Mammary epithelial cell (primary cell): ENCODE measurements at regions of chr7 and their contacts with region 1.

Region 1: DNA sequence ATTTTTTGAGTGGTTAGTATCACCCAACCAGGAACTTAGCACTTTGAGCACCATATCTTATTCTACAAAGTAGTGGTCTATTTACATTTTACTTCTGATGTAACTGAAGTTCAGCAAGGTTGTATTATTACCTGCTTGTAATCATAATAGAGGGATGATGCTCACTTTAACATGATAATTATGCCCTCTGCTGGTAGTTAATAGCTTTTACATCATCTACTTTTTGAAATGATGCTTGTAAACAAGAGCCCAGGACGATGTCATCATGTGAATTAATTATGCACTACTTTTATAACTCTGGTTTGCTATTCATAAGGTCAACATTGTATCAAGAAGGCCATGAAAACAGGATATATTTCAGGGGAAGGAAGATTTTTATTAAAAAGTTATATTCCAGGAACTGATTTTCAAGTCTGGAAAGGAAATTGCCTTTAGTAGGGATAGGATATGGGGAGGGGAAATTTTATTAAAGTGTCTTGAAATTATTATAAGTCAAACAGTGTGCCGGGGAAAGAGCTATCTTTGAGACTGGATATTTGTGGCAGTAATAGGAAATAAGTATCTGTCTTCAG is 80.3 kb upstream of the SCIN start:
- DNase-seq: peak; percentile 14
- H3K4me3 ChIP-seq: no peak overlapping the region
- H3K27ac ChIP-seq: no peak overlapping the region
- H3K4me1 ChIP-seq: no peaks in the 10 kb centered on the region
- H3K27me3 ChIP-seq: no peaks in the 10 kb centered on the region
- CTCF ChIP-seq: peak; percentile 32 to 60

Region 2: GRCh38 chr7:11427686-11428273 is 1062.4 kb before region 1 on chr7:
- CTCF ChIA-PET with region 1: no interaction called
- dilution Hi-C with region 1: no loop called
- in situ Hi-C with region 1: no loop called
- intact Hi-C with region 1: loop called (anchors 2 kb)
- DNase-seq: peak; percentile 38
- H3K4me3 ChIP-seq: no peak overlapping the region
- H3K27ac ChIP-seq: no peak overlapping the region
- H3K4me1 ChIP-seq: no peaks in the 10 kb centered on the region
- H3K27me3 ChIP-seq: peaks cover 4% of the 10 kb centered on the region
- CTCF ChIP-seq: peak; percentile 64 to 73

Region 3: GRCh38 chr7:11831736-11832495 is 658.3 kb before region 1 on chr7 and contains the start of gene THSD7A:
- CTCF ChIA-PET with region 1: no interaction called
- dilution Hi-C with region 1: no loop called
- in situ Hi-C with region 1: loop called (anchors 10 to 25 kb)
- intact Hi-C with region 1: loop called (anchors 2 kb)
- DNase-seq: peak; percentile 17
- H3K4me3 ChIP-seq: peak within 1 kb of the TSS; percentile 30 to 46 (median 41)
- H3K27ac ChIP-seq: no peak within 1 kb of the TSS
- H3K4me1 ChIP-seq: peaks cover 14% of the 10 kb centered on the region
- H3K27me3 ChIP-seq: peaks cover 23% of the 10 kb centered on the region
- CTCF ChIP-seq: no peak
- total RNA-seq, gene THSD7A: not detected

Region 4: DNA sequence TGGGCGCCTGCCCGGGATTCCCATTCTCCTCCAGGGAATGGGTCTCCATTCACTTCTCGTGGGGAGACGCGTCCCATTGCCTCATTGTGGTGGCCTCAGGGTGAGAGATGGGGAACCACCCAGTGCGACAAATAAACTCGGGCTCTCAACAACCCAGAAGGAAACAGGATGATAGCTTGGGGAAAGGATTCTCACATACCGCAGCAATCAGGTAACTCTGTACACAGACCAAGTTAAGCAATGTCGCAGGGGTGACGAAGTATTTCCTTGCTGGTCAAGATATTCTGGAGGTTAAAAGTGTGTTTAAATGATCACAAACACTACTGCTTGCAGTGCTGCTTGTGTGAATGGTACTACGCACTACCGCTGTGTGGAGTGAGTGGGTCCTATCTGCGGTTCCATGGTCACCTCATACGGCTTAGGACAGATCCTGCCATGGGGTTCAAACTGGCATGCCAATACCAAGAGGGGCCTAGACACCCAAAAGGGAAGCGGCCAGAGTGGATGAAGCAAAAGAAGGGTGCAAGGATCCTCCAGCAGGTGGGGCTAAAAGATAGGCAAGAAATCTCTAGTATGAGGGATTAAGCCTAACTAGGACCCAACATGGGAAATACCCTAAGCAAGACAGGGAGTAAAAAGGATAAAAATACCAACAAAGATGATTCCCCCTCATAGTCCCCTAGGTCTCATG is 422.9 kb before region 1 on chr7:
- CTCF ChIA-PET with region 1: no interaction called
- dilution Hi-C with region 1: no loop called
- in situ Hi-C with region 1: loop called in 1 of 2 experiments (anchors 25 kb)
- intact Hi-C with region 1: loop called (anchors 1 kb)
- DNase-seq: peak; percentile 28
- H3K4me3 ChIP-seq: no peak overlapping the region
- H3K27ac ChIP-seq: no peak overlapping the region
- H3K4me1 ChIP-seq: no peaks in the 10 kb centered on the region
- H3K27me3 ChIP-seq: no peaks in the 10 kb centered on the region
- CTCF ChIP-seq: peak; percentile 46 to 70

Region 5: GRCh38 chr7:12378389-12378788 is 111.8 kb before region 1 on chr7:
- CTCF ChIA-PET with region 1: no interaction called
- dilution Hi-C with region 1: no loop called
- in situ Hi-C with region 1: no loop called
- intact Hi-C with region 1: no loop called
- DNase-seq: no peak
- H3K4me3 ChIP-seq: no peak overlapping the region
- H3K27ac ChIP-seq: no peak overlapping the region
- H3K4me1 ChIP-seq: no peaks in the 10 kb centered on the region
- H3K27me3 ChIP-seq: no peaks in the 10 kb centered on the region
- CTCF ChIP-seq: no peak

Region 6: GRCh38 chr7:12389089-12389700 is 101.0 kb before region 1 on chr7:
- CTCF ChIA-PET with region 1: no interaction called
- dilution Hi-C with region 1: no loop called
- in situ Hi-C with region 1: loop called in 1 of 2 experiments (anchors 5 kb)
- intact Hi-C with region 1: loop called (anchors 1 kb)
- DNase-seq: peak; percentile 41
- H3K4me3 ChIP-seq: no peak overlapping the region
- H3K27ac ChIP-seq: no peak overlapping the region
- H3K4me1 ChIP-seq: no peaks in the 10 kb centered on the region
- H3K27me3 ChIP-seq: no peaks in the 10 kb centered on the region
- CTCF ChIP-seq: peak; percentile 81 to 90

Region 7: GRCh38 chr7:12434009-12434642 is 56.1 kb before region 1 on chr7:
- CTCF ChIA-PET with region 1: no interaction called
- dilution Hi-C with region 1: loop called (anchors 5 kb)
- in situ Hi-C with region 1: no loop called
- intact Hi-C with region 1: loop called (anchors 2 kb)
- DNase-seq: no peak
- H3K4me3 ChIP-seq: no peak overlapping the region
- H3K27ac ChIP-seq: no peak overlapping the region
- H3K4me1 ChIP-seq: peaks cover 3% of the 10 kb centered on the region
- H3K27me3 ChIP-seq: no peaks in the 10 kb centered on the region
- CTCF ChIP-seq: peak; percentile 54 to 57

Region 8: GRCh38 chr7:12458520-12459131 is 31.6 kb before region 1 on chr7:
- CTCF ChIA-PET with region 1: interaction called, 10 read pairs
- dilution Hi-C with region 1: no loop called
- in situ Hi-C with region 1: loop called in 1 of 2 experiments (anchors 5 kb)
- intact Hi-C with region 1: loop called (anchors 1 kb)
- DNase-seq: peak; percentile 19
- H3K4me3 ChIP-seq: no peak overlapping the region
- H3K27ac ChIP-seq: no peak overlapping the region
- H3K4me1 ChIP-seq: no peaks in the 10 kb centered on the region
- H3K27me3 ChIP-seq: no peaks in the 10 kb centered on the region
- CTCF ChIP-seq: peak; percentile 75 to 84